B cell (primary cell): ENCODE measurements at regions of chr7 and their contacts with region 1.

Region 1: DNA sequence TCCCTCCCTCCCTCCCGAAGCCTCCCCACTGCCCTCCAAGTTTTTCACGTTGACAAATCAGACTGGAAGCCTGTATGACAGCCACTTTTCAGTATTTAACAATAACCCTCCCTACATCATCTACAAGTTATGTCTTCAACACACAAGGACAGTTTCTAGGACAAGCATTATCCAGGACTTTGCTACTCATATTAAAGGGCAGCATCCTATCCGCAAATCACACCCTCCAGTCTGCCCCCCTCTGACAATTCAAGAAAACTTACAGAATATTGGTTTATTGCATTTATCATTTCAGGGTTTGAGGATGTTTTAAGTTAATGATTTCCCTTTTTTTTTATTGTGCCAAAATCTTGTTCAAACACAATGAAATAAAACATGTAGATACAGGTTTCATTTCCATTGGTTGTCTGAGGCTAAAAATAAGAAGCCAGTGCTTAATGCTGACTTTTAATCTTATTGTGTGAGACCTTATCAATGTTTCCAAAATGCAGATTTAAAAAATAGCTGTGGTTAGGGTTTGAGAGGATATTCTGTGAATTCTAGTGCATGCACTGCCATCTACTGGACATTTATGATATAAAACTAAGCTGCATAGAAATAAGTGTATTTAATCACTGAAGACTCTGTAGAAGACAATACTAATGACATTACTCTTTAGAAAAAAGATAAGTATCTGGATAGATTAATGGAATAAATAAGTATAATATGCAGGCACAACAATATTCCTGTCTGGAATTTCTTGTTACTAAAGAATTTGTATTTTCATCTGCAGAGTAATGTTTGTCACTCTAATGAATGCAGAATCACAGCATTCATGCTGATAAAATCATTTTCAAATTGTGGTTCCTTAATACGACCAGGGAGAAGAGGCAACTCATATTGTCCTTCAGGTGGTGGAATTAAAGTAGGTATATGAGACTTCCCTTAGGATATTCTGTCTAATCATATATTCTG is 64.1 kb downstream of the CAV1 start:
- DNase-seq: peak; percentile 66
- ATAC-seq: peak; percentile 60
- H3K4me3 ChIP-seq: no peak overlapping the region
- H3K4me3 Mint-ChIP-seq: no peak overlapping the region
- H3K27ac ChIP-seq: no peak overlapping the region
- H3K27ac Mint-ChIP-seq: no peak overlapping the region
- H3K4me1 ChIP-seq: peaks cover 12 to 19% of the 10 kb centered on the region in 2 donors
- H3K4me1 Mint-ChIP-seq: peaks cover 19% of the 10 kb centered on the region
- H3K27me3 ChIP-seq: peaks cover 0 to 18% (median 16%) of the 10 kb centered on the region in 4 experiments
- H3K27me3 Mint-ChIP-seq: peaks cover 19% of the 10 kb centered on the region
- CTCF ChIP-seq: peak; percentile 91

Region 2: GRCh38 chr7:115260381-115260780 is 1328.5 kb before region 1 on chr7:
- CTCF ChIA-PET with region 1: no interaction called
- POLR2A ChIA-PET with region 1: no interaction called
- intact Hi-C with region 1: no loop called
- DNase-seq: no peak
- ATAC-seq: no peak
- H3K4me3 ChIP-seq: no peak overlapping the region
- H3K4me3 Mint-ChIP-seq: no peak overlapping the region
- H3K27ac ChIP-seq: no peak overlapping the region
- H3K27ac Mint-ChIP-seq: no peak overlapping the region
- H3K4me1 ChIP-seq: no peaks in the 10 kb centered on the region
- H3K4me1 Mint-ChIP-seq: no peaks in the 10 kb centered on the region
- H3K27me3 ChIP-seq: no peaks in the 10 kb centered on the region
- H3K27me3 Mint-ChIP-seq: peaks cover 3% of the 10 kb centered on the region
- CTCF ChIP-seq: no peak

Region 3: DNA sequence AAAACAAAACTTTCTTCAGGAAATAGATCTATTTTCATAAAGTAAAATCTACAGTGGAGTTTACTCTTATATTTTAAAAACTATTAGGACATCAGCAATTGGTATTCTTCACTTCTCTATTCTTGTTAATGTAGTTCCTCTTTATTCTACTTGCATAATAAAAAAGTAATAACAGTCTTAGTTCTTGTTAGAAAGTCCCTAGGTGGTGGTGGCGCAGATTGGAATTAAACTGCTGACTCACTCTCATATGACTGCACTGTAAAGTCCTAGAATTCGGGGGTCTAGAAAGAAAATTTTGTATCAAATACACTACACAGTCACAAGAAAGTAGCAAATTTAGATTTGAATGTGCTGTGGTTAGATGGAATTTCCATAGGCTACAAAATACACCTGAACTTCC is 423.2 kb before region 1 on chr7:
- CTCF ChIA-PET with region 1: interaction called, 64 read pairs
- POLR2A ChIA-PET with region 1: no interaction called
- intact Hi-C with region 1: no loop called
- DNase-seq: peak; percentile 81
- ATAC-seq: peak; percentile 84
- H3K4me3 ChIP-seq: peak overlapping the region in 1 of 5 experiments; percentile 49
- H3K4me3 Mint-ChIP-seq: peak overlapping the region; percentile 71
- H3K27ac ChIP-seq: peak overlapping the region; percentile 27 to 42
- H3K27ac Mint-ChIP-seq: peak overlapping the region; percentile 90
- H3K4me1 ChIP-seq: peaks cover 44 to 45% of the 10 kb centered on the region in 2 donors
- H3K4me1 Mint-ChIP-seq: peaks cover 60% of the 10 kb centered on the region
- H3K27me3 ChIP-seq: no peaks in the 10 kb centered on the region
- H3K27me3 Mint-ChIP-seq: no peaks in the 10 kb centered on the region
- CTCF ChIP-seq: no peak

Region 4: GRCh38 chr7:116236020-116236630 is 352.8 kb before region 1 on chr7:
- CTCF ChIA-PET with region 1: interaction called, 20 read pairs
- POLR2A ChIA-PET with region 1: no interaction called
- intact Hi-C with region 1: no loop called
- DNase-seq: peak; percentile 71
- ATAC-seq: peak; percentile 80
- H3K4me3 ChIP-seq: no peak overlapping the region
- H3K4me3 Mint-ChIP-seq: no peak overlapping the region
- H3K27ac ChIP-seq: no peak overlapping the region
- H3K27ac Mint-ChIP-seq: no peak overlapping the region
- H3K4me1 ChIP-seq: peaks cover 0 to 8% of the 10 kb centered on the region in 2 donors
- H3K4me1 Mint-ChIP-seq: peaks cover 32% of the 10 kb centered on the region
- H3K27me3 ChIP-seq: no peaks in the 10 kb centered on the region
- H3K27me3 Mint-ChIP-seq: no peaks in the 10 kb centered on the region
- CTCF ChIP-seq: peak; percentile 85

Region 5: GRCh38 chr7:116560021-116560970 is 28.6 kb before region 1 on chr7:
- CTCF ChIA-PET with region 1: interaction called, 16 read pairs
- POLR2A ChIA-PET with region 1: no interaction called
- intact Hi-C with region 1: no loop called
- DNase-seq: no peak
- ATAC-seq: no peak
- H3K4me3 ChIP-seq: no peak overlapping the region
- H3K4me3 Mint-ChIP-seq: no peak overlapping the region
- H3K27ac ChIP-seq: no peak overlapping the region
- H3K27ac Mint-ChIP-seq: no peak overlapping the region
- H3K4me1 ChIP-seq: peaks cover 2 to 4% of the 10 kb centered on the region in 2 donors
- H3K4me1 Mint-ChIP-seq: peaks cover 7% of the 10 kb centered on the region
- H3K27me3 ChIP-seq: peaks cover 0 to 12% (median 3%) of the 10 kb centered on the region in 4 experiments
- H3K27me3 Mint-ChIP-seq: peaks cover 39% of the 10 kb centered on the region
- CTCF ChIP-seq: no peak

Region 6: DNA sequence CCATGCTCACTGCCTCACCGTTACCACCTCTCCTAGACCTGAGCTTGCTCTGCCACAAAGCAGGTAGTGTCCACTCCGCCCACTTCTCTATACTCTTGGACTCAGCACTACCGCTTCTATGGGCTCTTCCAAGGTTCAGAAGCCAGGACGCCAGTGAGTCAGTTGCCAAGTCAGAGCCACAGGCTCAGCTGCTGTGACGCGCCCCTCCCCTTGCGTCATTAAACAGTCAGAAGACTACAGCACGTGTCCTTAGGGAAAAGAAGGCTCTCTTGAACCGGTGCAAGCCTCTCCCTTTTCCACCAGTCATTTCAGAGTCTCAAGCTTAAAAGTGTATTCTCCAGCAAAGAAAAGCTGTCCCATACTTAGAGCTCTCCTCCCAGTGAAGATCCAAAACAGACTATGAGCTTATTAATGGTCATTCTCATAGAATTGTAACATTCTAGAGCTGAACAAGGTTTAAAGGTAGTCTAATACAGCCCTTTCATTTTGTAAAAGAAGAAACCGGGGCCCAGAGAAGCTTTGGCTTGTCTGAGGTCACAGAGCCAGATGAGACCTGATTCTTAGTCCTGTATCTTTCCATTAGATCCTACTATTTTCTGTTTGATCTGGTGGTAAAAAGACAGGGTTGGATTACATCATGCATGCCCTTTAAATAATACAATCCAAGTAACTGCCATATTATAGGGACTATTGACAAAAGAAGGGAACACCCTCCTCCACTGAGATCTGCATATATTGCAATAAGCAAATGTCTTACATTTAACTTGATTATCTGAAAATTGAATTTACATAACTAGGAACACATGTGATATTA is 42.2 kb after region 1 on chr7:
- CTCF ChIA-PET with region 1: interaction called, 10 read pairs
- POLR2A ChIA-PET with region 1: no interaction called
- intact Hi-C with region 1: no loop called
- DNase-seq: peak; percentile 62
- ATAC-seq: peak; percentile 77
- H3K4me3 ChIP-seq: peak overlapping the region in 2 of 5 experiments; percentile 25 to 34
- H3K4me3 Mint-ChIP-seq: peak overlapping the region; percentile 81
- H3K27ac ChIP-seq: no peak overlapping the region
- H3K27ac Mint-ChIP-seq: peak overlapping the region; percentile 17
- H3K4me1 ChIP-seq: peaks cover 0 to 7% of the 10 kb centered on the region in 2 donors
- H3K4me1 Mint-ChIP-seq: peaks cover 22% of the 10 kb centered on the region
- H3K27me3 ChIP-seq: peaks cover 0 to 7% (median 0%) of the 10 kb centered on the region in 4 experiments
- H3K27me3 Mint-ChIP-seq: no peaks in the 10 kb centered on the region
- CTCF ChIP-seq: no peak

Region 7: DNA sequence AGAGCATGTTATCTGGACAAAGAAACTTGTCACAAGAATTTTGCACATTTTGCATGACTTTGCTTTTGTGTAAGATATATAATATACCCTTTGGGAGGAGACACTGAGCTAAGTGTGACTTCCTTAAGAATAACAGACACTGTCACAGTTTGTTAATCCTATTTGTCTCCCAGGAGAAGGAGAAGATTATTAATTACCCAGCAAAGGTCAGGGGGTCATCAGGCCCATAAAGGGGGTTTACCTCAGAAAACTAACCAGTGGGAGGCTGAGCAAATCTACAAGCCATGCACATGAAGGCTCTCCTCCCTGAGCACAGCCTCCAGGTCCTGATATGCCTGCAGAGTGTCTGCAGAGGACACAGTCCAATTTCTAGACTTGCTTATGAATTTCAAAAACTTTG is 72.9 kb after region 1 on chr7:
- CTCF ChIA-PET with region 1: no interaction called
- POLR2A ChIA-PET with region 1: no interaction called
- intact Hi-C with region 1: no loop called
- DNase-seq: no peak
- ATAC-seq: no peak
- H3K4me3 ChIP-seq: no peak overlapping the region
- H3K4me3 Mint-ChIP-seq: no peak overlapping the region
- H3K27ac ChIP-seq: no peak overlapping the region
- H3K27ac Mint-ChIP-seq: no peak overlapping the region
- H3K4me1 ChIP-seq: no peaks in the 10 kb centered on the region
- H3K4me1 Mint-ChIP-seq: no peaks in the 10 kb centered on the region
- H3K27me3 ChIP-seq: peaks cover 0 to 23% (median 11%) of the 10 kb centered on the region in 4 experiments
- H3K27me3 Mint-ChIP-seq: peaks cover 65% of the 10 kb centered on the region
- CTCF ChIP-seq: no peak

Region 8: DNA sequence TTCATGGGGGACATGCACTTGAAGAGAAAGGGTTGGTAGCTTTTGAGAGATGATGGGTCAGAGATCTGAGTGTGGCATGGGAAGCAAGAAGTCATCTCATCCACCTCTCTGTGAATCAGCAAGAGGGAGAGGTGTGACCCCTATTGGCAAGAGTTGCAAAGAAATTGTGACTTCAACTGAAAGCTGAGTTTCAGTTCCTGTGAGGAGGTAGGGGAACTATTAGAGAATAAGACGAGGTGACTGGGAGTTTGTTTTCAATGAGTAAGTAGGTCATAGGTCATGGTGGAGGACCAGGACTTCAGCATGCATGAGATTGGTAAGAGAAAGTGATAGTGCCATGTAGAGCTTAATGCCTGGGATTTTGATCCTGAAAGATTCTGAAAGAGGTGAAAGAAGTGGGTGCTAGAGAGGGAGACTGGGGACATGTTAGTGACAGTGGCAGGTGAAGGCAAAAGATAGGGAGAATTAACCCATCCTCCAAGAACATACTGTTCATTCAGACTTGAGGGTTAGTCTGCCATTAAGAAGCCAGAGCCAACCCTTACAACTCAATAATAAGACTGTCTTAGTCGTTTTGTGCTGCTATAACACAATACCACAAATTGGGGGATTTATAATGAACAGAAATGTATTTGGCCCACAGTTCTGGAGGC is 198.0 kb after region 1 on chr7:
- CTCF ChIA-PET with region 1: interaction called, 71 read pairs
- POLR2A ChIA-PET with region 1: no interaction called
- intact Hi-C with region 1: loop called (anchors 1 kb)
- DNase-seq: peak; percentile 76
- ATAC-seq: peak; percentile 96
- H3K4me3 ChIP-seq: no peak overlapping the region
- H3K4me3 Mint-ChIP-seq: no peak overlapping the region
- H3K27ac ChIP-seq: no peak overlapping the region
- H3K27ac Mint-ChIP-seq: no peak overlapping the region
- H3K4me1 ChIP-seq: peaks cover 4 to 11% of the 10 kb centered on the region in 2 donors
- H3K4me1 Mint-ChIP-seq: no peaks in the 10 kb centered on the region
- H3K27me3 ChIP-seq: no peaks in the 10 kb centered on the region
- H3K27me3 Mint-ChIP-seq: no peaks in the 10 kb centered on the region
- CTCF ChIP-seq: peak; percentile 60

Region 9: GRCh38 chr7:116815041-116815440 is 226.1 kb after region 1 on chr7:
- CTCF ChIA-PET with region 1: interaction called, 97 read pairs
- POLR2A ChIA-PET with region 1: no interaction called
- intact Hi-C with region 1: no loop called
- DNase-seq: no peak
- ATAC-seq: no peak
- H3K4me3 ChIP-seq: no peak overlapping the region
- H3K4me3 Mint-ChIP-seq: no peak overlapping the region
- H3K27ac ChIP-seq: no peak overlapping the region
- H3K27ac Mint-ChIP-seq: no peak overlapping the region
- H3K4me1 ChIP-seq: no peaks in the 10 kb centered on the region
- H3K4me1 Mint-ChIP-seq: no peaks in the 10 kb centered on the region
- H3K27me3 ChIP-seq: peaks cover 0 to 4% (median 1%) of the 10 kb centered on the region in 4 experiments
- H3K27me3 Mint-ChIP-seq: peaks cover 16% of the 10 kb centered on the region
- CTCF ChIP-seq: no peak

Region 10: DNA sequence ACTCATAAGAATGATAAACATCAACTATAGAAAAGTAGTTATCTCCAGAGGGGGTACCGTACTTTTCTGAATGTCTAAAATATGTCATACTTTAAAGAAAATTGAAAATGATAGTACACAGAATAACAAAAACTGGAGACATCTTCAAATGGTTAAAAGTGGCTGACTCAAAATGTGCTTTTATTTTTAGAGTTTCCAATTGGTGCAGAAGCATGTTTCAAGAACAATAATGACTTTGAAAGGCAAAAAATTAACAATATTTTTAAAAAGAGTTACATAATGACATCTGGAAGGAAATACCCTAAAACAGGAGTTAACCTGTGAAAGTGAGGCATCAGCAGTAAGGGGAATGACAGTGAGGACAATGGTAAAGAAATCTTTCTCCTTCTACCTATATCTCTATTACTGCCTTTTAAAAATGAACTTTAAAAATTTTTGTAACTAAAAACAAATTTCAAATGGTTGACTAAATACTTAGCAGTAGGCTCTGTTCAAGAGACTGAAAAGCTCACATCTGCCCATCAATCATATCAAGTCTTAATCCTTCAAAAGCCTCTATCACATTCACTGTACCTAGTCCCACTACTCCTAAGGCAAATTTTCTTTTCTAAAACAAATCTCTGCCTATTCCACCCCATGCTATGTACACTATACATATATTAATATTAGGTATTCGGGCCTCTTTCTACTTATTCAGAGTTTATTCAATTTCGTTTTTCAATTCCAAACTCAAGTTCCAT is 835.3 kb after region 1 on chr7:
- CTCF ChIA-PET with region 1: no interaction called
- POLR2A ChIA-PET with region 1: no interaction called
- intact Hi-C with region 1: no loop called
- DNase-seq: no peak
- ATAC-seq: no peak
- H3K4me3 ChIP-seq: no peak overlapping the region
- H3K4me3 Mint-ChIP-seq: no peak overlapping the region
- H3K27ac ChIP-seq: no peak overlapping the region
- H3K27ac Mint-ChIP-seq: no peak overlapping the region
- H3K4me1 ChIP-seq: no peaks in the 10 kb centered on the region
- H3K4me1 Mint-ChIP-seq: no peaks in the 10 kb centered on the region
- H3K27me3 ChIP-seq: no peaks in the 10 kb centered on the region
- H3K27me3 Mint-ChIP-seq: no peaks in the 10 kb centered on the region
- CTCF ChIP-seq: no peak